ENCODE measurements at regions of chr5 and their contacts with region 1.

Region 1: DNA sequence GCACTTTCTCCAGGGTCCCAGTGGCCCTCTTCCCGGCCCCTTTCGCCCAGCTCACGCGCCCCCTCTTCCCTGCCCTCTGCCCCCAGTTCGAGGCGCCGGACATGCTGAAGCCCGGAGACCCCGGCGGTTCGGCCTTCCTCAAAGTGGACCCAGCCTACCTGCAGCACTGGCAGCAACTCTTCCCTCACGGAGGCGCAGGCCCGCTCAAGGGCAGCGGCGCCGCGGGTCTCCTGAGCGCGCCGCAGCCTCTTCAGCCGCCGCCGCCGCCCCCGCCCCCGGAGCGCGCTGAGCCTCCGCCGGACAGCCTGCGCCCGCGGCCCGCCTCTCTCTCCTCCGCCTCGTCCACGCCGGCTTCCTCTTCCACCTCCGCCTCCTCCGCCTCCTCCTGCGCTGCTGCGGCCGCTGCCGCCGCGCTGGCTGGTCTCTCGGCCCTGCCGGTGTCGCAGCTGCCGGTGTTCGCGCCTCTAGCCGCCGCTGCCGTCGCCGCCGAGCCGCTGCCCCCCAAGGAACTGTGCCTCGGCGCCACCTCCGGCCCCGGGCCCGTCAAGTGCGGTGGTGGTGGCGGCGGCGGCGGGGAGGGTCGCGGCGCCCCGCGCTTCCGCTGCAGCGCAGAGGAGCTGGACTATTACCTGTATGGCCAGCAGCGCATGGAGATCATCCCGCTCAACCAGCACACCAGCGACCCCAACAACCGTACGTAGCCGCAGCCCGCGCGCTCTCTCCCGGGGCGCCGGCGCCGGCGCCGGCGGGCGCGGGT is 1.1 kb downstream of the PRDM6 start:
- DNase-seq: peak; percentile 13
- H3K4me3 ChIP-seq: peak overlapping the region; percentile 18 to 32 (median 21)
- H3K27ac ChIP-seq: no peak overlapping the region
- H3K4me1 ChIP-seq: peaks cover 16% of the 10 kb centered on the region
- H3K27me3 ChIP-seq: peaks cover 82 to 99% of the 10 kb centered on the region in 2 experiments
- CTCF ChIP-seq: no peak
- POLR2A ChIP-seq: no peak

Region 2: DNA sequence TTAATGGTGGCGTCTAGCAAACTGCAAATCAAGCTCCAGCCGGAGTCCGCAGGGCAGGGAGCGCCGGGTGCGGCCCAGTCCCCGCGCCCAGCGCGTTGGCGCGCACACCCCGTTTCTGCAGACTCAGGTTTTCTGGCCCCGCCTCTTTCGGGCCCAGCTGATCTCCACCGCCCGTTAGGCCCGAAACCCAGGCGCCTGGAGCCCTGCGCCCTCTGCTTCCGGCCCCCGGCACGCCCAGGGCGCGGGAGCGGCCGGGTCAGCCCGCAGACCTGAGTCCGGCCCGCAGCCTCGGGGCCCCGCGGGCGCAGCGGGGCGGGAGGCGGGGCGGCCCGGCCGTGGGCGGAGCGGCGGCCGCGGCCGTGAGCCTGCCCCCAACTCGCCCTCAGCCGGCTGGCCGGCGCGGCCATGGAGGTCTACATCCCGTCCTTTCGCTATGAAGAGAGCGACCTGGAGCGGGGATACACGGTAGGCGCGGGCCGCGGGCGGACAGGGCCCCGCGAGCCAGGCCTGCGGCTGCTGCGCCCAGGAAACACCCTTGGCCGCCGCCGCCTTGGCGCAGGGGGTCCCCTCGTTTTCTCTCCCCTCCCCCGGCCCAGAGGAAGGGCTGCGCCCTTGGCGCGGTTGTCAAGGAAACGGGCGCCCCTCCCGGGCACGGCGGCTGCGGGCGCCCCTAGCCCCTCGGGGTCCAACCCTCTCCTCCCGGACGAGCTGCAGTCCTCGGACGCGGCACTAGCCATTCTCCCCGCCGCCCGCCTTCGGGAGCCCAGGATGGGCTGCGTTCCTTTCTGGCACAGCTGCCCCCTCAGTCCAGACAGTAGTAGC is 244.7 kb before region 1 on chr5 and contains the start of gene SNX24:
- CTCF ChIA-PET with region 1: no interaction called
- POLR2A ChIA-PET with region 1: no interaction called
- dilution Hi-C with region 1: no loop called
- intact Hi-C with region 1: loop called (anchors 5 kb)
- DNase-seq: peak; percentile 71
- H3K4me3 ChIP-seq: peak within 1 kb of the TSS; percentile 76 to 95 (median 93)
- H3K27ac ChIP-seq: peak within 1 kb of the TSS; percentile 0
- H3K4me1 ChIP-seq: peaks cover 18% of the 10 kb centered on the region
- H3K27me3 ChIP-seq: no peaks in the 10 kb centered on the region
- CTCF ChIP-seq: no peak
- POLR2A ChIP-seq: peak; percentile 73
- total RNA-seq, gene SNX24: 8.8 and 14.9 TPM in 2 replicates

Region 3: DNA sequence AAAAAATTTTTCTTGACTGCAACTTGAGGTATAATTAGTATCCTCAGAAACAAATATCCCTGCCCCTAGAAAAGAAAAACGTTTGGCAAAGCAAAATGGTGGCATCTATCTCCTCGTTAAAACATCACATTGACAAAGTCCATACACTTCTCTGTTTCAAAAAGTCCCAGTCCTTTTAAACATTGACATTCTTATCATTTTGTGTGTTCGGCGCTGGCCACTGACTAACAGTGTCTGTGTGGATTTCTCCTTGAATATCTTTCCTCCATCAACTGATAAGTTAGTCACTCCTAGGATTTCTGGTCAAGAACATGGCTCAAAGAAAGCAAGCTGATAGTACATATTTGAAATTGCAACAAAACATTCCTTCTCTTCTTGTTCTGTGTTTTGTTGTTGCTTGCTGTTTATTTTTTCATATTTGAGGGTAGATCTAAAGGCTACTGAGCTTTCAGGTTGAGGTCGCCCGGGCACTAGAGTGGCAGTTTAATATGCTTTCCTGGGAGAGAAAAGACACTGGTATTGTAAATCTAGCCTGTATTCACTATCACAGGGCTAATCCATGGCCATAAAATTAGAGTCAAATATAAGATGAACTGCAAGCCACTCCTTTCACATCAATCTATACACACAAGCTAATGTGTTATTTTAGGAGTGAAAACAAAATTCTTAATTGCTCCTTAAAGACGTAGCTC is 45.0 kb before region 1 on chr5:
- CTCF ChIA-PET with region 1: no interaction called
- POLR2A ChIA-PET with region 1: no interaction called
- dilution Hi-C with region 1: no loop called
- intact Hi-C with region 1: no loop called
- DNase-seq: no peak
- H3K4me3 ChIP-seq: no peak overlapping the region
- H3K27ac ChIP-seq: no peak overlapping the region
- H3K4me1 ChIP-seq: no peaks in the 10 kb centered on the region
- H3K27me3 ChIP-seq: peaks cover 0 to 3% of the 10 kb centered on the region in 2 experiments
- CTCF ChIP-seq: no peak
- POLR2A ChIP-seq: no peak